Calu3 (cell line): ENCODE measurements at regions of chr2 and their contacts with region 1.

Region 1: GRCh38 chr2:9897331-9897737 is 54.1 kb downstream of the TAF1B start:
- DNase-seq: peak; percentile 76
- H3K4me3 Mint-ChIP-seq: no peak overlapping the region
- H3K27ac Mint-ChIP-seq: peak overlapping the region; percentile 18
- H3K4me1 Mint-ChIP-seq: peaks cover 29% of the 10 kb centered on the region
- H3K27me3 Mint-ChIP-seq: no peaks in the 10 kb centered on the region
- CTCF ChIP-seq: no peak

Region 2: DNA sequence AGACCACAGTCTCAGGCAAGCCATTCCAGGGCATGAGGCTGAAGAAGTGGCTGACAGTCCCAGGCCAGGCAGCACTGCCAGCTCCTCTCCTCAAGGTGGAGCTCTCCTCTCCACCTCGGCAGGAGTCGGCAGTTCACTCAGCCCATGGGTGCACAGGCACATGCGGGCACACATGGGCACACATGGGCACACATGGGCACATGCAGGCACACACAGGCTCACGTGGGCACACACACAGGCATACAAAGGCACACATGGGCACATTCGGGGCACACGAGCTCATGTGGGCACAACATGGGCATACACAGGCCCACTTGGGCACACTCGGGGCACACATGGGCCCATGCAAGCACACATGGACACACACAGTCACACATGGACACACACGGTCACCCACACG is 119.3 kb before region 1 on chr2:
- CTCF ChIA-PET with region 1: no interaction called
- intact Hi-C with region 1: no loop called
- DNase-seq: no peak
- H3K4me3 Mint-ChIP-seq: no peak overlapping the region
- H3K27ac Mint-ChIP-seq: no peak overlapping the region
- H3K4me1 Mint-ChIP-seq: peaks cover 12% of the 10 kb centered on the region
- H3K27me3 Mint-ChIP-seq: peaks cover 10% of the 10 kb centered on the region
- CTCF ChIP-seq: peak; percentile 14

Region 3: GRCh38 chr2:9813312-9814133 is 83.8 kb before region 1 on chr2:
- CTCF ChIA-PET with region 1: interaction called, 3 read pairs
- intact Hi-C with region 1: loop called (anchors 5 kb)
- DNase-seq: peak; percentile 83
- H3K4me3 Mint-ChIP-seq: no peak overlapping the region
- H3K27ac Mint-ChIP-seq: no peak overlapping the region
- H3K4me1 Mint-ChIP-seq: peaks cover 40% of the 10 kb centered on the region
- H3K27me3 Mint-ChIP-seq: no peaks in the 10 kb centered on the region
- CTCF ChIP-seq: peak; percentile 90

Region 4: DNA sequence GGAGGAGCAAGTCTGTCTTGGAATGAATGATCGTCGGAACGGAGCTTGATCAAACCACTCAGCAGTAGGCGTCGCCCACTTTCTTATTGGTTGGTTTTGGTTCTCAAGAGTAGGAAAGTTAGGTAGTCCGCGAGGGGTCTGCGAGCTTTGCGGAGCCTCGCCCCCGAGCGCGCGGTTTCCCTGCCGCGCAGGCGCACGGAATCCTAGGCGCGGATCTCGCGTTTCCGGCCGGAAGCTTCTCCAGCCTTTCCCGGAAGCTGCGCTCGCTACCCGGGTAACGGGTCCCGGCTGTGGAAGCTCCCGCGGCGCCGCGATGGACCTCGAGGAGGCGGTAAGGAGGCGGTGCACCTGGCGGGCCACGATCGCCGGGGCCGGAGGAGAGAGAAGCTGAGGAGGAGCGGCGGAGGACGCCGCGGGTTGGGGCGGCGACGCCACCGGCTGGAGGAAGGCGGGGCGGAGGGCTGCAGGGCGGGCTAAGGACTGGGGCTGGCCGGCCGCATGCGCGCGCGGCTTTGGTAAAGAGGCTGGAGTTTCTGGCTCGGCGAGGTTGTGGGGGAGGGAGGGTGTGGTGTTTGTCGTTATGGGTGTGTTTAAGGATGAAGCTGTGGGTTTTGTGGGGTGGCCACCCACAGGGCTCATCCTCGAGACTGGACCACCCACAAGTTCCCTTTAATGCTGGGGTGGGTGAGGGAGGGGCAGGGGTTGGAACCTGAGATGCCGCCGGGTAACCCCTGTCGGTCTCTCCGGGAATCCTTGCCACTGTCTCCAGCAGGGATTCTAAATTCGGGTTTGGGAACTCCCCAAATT is 53.9 kb before region 1 on chr2 and contains the start of gene TAF1B:
- CTCF ChIA-PET with region 1: interaction called, 5 read pairs
- intact Hi-C with region 1: loop called (anchors 5 kb)
- DNase-seq: peak; percentile 88
- H3K4me3 Mint-ChIP-seq: peak within 1 kb of the TSS; percentile 98
- H3K27ac Mint-ChIP-seq: peak within 1 kb of the TSS; percentile 92
- H3K4me1 Mint-ChIP-seq: peaks cover 30% of the 10 kb centered on the region
- H3K27me3 Mint-ChIP-seq: no peaks in the 10 kb centered on the region
- CTCF ChIP-seq: no peak
- total RNA-seq, gene TAF1B: 17.8 and 23.0 TPM in 2 replicates

Region 5: GRCh38 chr2:10028988-10029874 is 131.9 kb after region 1 on chr2:
- CTCF ChIA-PET with region 1: no interaction called
- intact Hi-C with region 1: no loop called
- DNase-seq: peak; percentile 48
- H3K4me3 Mint-ChIP-seq: no peak overlapping the region
- H3K27ac Mint-ChIP-seq: no peak overlapping the region
- H3K4me1 Mint-ChIP-seq: no peaks in the 10 kb centered on the region
- H3K27me3 Mint-ChIP-seq: peaks cover 9% of the 10 kb centered on the region
- CTCF ChIP-seq: no peak